ENCODE measurements at regions of chr2 and their contacts with region 1.

Region 1: GRCh38 chr2:176653479-176654443 is 384.5 kb downstream of the MTX2 start:
- H3K4me3 ChIP-seq: no peak overlapping the region
- H3K27ac ChIP-seq: no peak overlapping the region
- H3K4me1 ChIP-seq: peaks cover 7% of the 10 kb centered on the region
- CTCF ChIP-seq: peak; percentile 78

Region 2: DNA sequence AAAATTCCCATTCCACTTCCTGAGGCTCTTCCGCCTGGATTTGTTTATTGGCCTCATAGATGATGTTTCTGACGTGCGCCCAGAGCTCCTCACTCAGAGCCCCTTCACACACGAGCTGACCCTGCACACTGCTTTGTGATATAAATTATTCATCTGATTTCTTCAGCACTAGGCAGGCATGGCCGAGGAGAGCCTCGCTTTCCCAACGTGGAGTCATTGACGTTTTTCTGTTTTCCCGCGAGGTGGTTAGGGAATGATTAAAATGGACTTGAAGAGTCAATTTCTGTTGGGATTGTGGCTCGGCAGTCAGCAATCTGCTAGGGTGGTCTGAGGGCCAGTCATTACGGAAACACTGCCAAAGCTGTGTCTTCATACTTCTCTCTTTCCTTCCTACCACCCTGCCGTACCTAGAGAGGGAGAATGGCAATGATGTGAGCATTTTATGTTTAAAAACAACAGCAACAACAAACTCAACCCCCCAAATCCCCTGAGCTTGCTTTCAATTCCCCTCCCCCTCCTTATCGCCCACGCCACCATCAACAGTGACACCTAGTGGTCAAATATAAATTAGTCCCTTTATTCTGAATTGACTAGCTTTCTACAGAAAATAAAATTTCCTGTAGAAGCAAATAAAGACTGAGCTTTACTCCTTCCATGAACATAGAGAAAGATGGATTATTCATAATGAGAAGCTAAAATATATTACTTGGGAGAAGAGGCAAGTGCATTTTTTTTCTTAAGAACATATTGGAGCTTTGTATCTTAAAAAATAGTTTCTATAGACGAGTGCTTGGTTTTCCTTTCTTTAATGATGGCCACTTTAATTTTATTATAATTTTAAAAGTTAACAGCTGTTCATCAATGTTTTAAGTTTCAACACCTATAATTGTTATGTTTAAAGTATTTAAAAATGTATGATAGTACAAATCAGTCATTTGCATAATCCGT is 99.4 kb before region 1 on chr2:
- CTCF ChIA-PET with region 1: interaction called, 10 read pairs
- POLR2A ChIA-PET with region 1: no interaction called
- H3K4me3 ChIP-seq: peak overlapping the region; percentile 17
- H3K27ac ChIP-seq: peak overlapping the region; percentile 92
- H3K4me1 ChIP-seq: peaks cover 7% of the 10 kb centered on the region; the same call in 1 of the 2 replicates
- CTCF ChIP-seq: peak; percentile 90

Region 3: GRCh38 chr2:176574484-176575236 is 79.1 kb before region 1 on chr2:
- CTCF ChIA-PET with region 1: no interaction called
- POLR2A ChIA-PET with region 1: no interaction called
- H3K4me3 ChIP-seq: no peak overlapping the region
- H3K27ac ChIP-seq: no peak overlapping the region
- H3K4me1 ChIP-seq: no peaks in the 10 kb centered on the region
- CTCF ChIP-seq: no peak

Region 4: GRCh38 chr2:176664478-176664877 is 10.7 kb after region 1 on chr2:
- CTCF ChIA-PET with region 1: interaction called, 54 read pairs
- POLR2A ChIA-PET with region 1: no interaction called
- H3K4me3 ChIP-seq: no peak overlapping the region
- H3K27ac ChIP-seq: no peak overlapping the region
- H3K4me1 ChIP-seq: no peaks in the 10 kb centered on the region
- CTCF ChIP-seq: no peak

Region 5: GRCh38 chr2:176814306-176815052 is 160.7 kb after region 1 on chr2:
- CTCF ChIA-PET with region 1: interaction called, 23 read pairs
- POLR2A ChIA-PET with region 1: interaction called, 7 read pairs
- H3K4me3 ChIP-seq: no peak overlapping the region
- H3K27ac ChIP-seq: no peak overlapping the region
- H3K4me1 ChIP-seq: peaks cover 4% of the 10 kb centered on the region; the same call in 1 of the 2 replicates
- CTCF ChIP-seq: peak; percentile 36; the same call in 1 of the 2 replicates

Measured in HEK293 (cell line).